ENCODE measurements at regions of chr6 and their contacts with region 1.

Region 1: DNA sequence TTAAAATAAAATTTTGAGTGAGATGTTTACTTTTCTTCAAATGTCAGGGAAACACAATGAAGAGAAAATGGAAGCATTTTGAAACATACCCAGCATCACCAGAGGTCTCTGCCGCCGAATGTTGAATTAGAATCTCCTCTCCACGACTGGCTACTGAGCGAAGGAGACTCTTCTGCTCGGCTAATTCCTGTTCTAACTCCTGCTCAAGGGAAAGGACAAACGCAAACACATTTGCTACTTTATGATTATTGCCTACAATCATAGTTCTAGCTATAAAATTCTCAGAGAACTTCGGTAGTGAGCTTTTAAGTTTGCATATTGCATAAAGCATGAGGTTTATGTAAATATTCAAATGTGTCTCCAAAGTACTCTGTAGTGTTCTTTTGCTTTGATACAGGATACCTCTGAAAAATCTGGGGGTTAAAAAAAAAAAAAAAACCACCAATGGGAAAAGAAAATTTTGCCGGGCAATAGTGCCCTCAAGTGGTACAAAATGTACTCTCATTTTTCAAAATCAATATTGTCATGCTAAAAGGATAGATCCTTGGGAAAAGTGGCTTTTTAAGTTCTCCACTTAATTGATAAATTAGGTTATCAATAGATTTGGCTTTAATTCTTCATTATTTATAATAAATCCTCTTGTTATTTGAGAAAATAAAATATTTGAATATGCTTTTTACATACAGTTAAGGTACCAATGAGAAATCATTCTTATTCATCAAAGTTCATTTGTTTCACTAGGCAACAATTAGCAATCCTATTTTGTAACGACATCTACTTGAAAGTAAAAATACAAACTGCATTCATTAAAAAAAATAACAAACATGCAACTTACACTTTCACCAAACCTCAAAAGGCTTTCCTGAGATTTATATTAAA is 369.0 kb downstream of the SYNE1 start:
- DNase-seq: peak in 5 of 9 donors; percentile 26 to 45 (median 41)
- ATAC-seq: no peak
- H3K4me3 ChIP-seq: no peak overlapping the region
- H3K4me3 Mint-ChIP-seq: no peak overlapping the region
- H3K27ac ChIP-seq: no peak overlapping the region
- H3K27ac Mint-ChIP-seq: no peak overlapping the region
- H3K4me1 ChIP-seq: no peaks in the 10 kb centered on the region
- H3K4me1 Mint-ChIP-seq: peaks cover 0 to 15% (median 0%) of the 10 kb centered on the region in 7 donors
- H3K27me3 ChIP-seq: no peaks in the 10 kb centered on the region
- H3K27me3 Mint-ChIP-seq: no peaks in the 10 kb centered on the region

Region 2: GRCh38 chr6:151440930-151441329 is 827.3 kb before region 1 on chr6:
- CTCF ChIA-PET with region 1: no interaction called
- POLR2A ChIA-PET with region 1: no interaction called
- intact Hi-C with region 1: loop called (anchors 1 to 2 kb)
- DNase-seq: peak in 7 of 9 donors; percentile 10 to 46 (median 33)
- ATAC-seq: peak; percentile 47
- H3K4me3 ChIP-seq: no peak overlapping the region
- H3K4me3 Mint-ChIP-seq: no peak overlapping the region
- H3K27ac ChIP-seq: no peak overlapping the region
- H3K27ac Mint-ChIP-seq: peak overlapping the region in 3 of 9 donors; percentile 2 to 23 (median 20)
- H3K4me1 ChIP-seq: peaks cover 6 to 8% of the 10 kb centered on the region in 2 donors
- H3K4me1 Mint-ChIP-seq: peaks cover 16 to 62% (median 47%) of the 10 kb centered on the region in 7 donors
- H3K27me3 ChIP-seq: no peaks in the 10 kb centered on the region
- H3K27me3 Mint-ChIP-seq: no peaks in the 10 kb centered on the region

Region 3: DNA sequence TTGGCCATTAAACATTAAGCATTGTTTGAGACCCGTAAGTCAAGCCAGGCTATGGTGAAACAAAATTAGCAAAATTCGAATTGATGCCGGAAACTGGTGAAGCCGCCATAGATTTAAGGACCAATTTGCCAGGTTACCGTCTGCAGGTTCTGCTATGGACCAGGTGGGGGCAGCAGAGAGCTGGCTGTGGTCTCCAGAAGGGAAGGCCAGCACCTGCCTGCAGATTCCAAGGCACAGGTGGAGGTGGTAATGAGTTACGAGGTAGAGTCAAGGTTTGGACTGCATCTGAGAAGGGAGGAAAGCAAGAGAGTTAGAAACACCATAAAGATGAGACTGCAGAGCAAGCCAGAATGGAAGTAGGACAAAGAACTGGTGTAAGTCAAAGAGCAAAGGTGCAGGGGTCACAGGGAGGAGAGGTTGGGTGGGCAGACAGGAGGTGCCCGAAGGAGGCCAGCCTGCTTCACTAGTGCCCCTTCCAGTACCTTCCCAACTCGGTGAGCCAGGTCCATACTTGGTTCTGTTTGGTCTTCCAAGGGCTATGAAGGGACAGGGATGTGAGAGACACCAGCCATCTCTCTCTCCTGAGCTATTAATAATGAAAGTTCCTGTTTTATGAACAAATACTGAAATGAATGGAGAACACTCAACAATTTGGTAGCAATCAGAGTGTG is 592.3 kb before region 1 on chr6:
- CTCF ChIA-PET with region 1: interaction called, 8 read pairs
- POLR2A ChIA-PET with region 1: no interaction called
- intact Hi-C with region 1: loop called (anchors 1 kb)
- DNase-seq: peak in 8 of 9 donors; percentile 8 to 54 (median 44)
- ATAC-seq: peak; percentile 79
- H3K4me3 ChIP-seq: no peak overlapping the region
- H3K4me3 Mint-ChIP-seq: no peak overlapping the region
- H3K27ac ChIP-seq: no peak overlapping the region
- H3K27ac Mint-ChIP-seq: peak overlapping the region in 1 of 9 donors; percentile 33
- H3K4me1 ChIP-seq: no peaks in the 10 kb centered on the region
- H3K4me1 Mint-ChIP-seq: peaks cover 0 to 6% (median under 1%) of the 10 kb centered on the region in 7 donors
- H3K27me3 ChIP-seq: no peaks in the 10 kb centered on the region
- H3K27me3 Mint-ChIP-seq: peaks cover 0 to 4% (median under 1%) of the 10 kb centered on the region in 5 donors

Region 4: DNA sequence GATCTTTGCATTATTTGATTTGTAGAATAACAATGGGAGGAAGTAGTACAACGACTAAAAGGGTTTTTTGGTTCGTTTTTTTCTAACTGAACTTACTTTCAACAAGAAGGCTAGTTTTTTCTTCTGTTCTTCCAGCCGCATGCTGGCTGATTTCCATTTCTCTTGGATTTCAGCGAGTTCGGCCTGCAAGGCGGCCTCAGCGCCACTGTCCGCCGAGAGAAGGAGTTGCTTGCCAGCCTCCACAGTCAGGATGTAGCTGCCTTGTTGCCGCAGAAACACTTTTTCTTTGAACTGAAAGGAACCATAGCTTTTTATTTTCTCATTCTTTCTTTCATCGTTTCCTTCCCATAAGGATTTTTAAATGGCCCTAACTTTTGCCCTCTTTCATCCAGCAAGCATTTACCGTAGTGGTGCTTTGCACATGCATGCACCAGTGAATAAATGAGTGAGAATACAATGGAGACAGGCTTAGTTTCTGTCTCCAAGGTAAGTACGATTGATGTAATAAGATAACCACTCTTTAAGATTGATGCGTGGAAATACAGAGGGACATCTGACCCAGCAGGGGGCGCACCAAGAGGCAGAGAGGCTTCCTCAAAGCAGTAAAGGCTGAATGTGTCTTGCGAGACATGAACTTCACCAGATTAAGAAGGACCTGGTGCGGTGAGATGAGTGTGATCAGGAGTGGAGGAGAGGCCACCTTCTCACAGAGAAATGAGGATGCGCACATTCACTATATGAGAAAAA is 62.0 kb before region 1 on chr6:
- CTCF ChIA-PET with region 1: no interaction called
- POLR2A ChIA-PET with region 1: no interaction called
- intact Hi-C with region 1: loop called in 1 of 2 experiments (anchors 1 kb)
- DNase-seq: peak in 7 of 9 donors; percentile 15 to 50 (median 39)
- ATAC-seq: peak; percentile 45
- H3K4me3 ChIP-seq: no peak overlapping the region
- H3K4me3 Mint-ChIP-seq: no peak overlapping the region
- H3K27ac ChIP-seq: no peak overlapping the region
- H3K27ac Mint-ChIP-seq: peak overlapping the region in 5 of 9 donors; percentile 3 to 72 (median 14)
- H3K4me1 ChIP-seq: no peaks in the 10 kb centered on the region
- H3K4me1 Mint-ChIP-seq: peaks cover 0 to 12% (median 7%) of the 10 kb centered on the region in 7 donors
- H3K27me3 ChIP-seq: no peaks in the 10 kb centered on the region
- H3K27me3 Mint-ChIP-seq: no peaks in the 10 kb centered on the region

Region 5: GRCh38 chr6:152318278-152318677 is 50.1 kb after region 1 on chr6:
- CTCF ChIA-PET with region 1: no interaction called
- POLR2A ChIA-PET with region 1: no interaction called
- intact Hi-C with region 1: no loop called
- DNase-seq: no peak
- ATAC-seq: no peak
- H3K4me3 ChIP-seq: no peak overlapping the region
- H3K4me3 Mint-ChIP-seq: no peak overlapping the region
- H3K27ac ChIP-seq: no peak overlapping the region
- H3K27ac Mint-ChIP-seq: no peak overlapping the region
- H3K4me1 ChIP-seq: no peaks in the 10 kb centered on the region
- H3K4me1 Mint-ChIP-seq: peaks cover 0 to 5% (median 0%) of the 10 kb centered on the region in 7 donors
- H3K27me3 ChIP-seq: no peaks in the 10 kb centered on the region
- H3K27me3 Mint-ChIP-seq: peaks cover 0 to 29% (median 4%) of the 10 kb centered on the region in 5 donors